ENCODE measurements at regions of chr11 and their contacts with region 1.

Region 1: DNA sequence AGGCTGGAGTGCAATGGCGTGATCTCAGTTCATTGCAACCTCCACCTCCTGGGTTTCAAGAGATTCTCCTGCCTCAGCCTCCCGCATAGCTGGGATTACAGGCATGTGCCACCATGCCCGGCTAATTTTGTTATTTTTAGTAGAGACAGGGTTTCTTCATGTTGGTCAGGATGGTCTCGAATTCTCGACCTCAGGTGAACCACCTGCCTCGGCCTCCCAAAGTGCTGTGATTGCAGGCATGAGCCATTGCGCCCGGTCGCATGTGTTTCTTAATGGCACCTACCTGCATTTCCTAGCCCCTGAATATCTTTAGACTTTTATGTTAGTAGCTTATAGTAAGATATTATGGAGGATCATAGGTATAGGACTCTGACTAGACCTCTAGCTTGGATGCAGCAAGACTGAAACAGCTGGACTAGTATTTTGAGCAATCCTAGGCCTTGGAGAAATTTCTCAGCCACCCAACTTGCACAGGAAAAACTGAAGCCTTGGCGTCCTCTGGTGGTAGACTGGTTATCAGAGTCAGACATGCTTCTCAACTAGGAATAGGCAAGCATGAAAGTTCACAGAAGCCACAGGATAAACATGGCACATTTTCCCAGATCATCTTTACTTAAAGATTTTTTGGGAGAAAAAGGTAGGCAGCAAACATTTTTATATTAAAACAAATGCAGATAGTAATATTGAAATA is 22.7 kb upstream of the C1QTNF4 start:
- DNase-seq: peak in 1 of 2 donors; percentile 66
- ATAC-seq: peak; percentile 59 to 90 (median 82)
- H3K4me3 ChIP-seq: no peak overlapping the region
- H3K27ac ChIP-seq: peak overlapping the region in 1 of 10 donors; percentile 37
- H3K4me1 ChIP-seq: peaks cover 0 to 11% (median 0%) of the 10 kb centered on the region in 9 donors
- H3K27me3 ChIP-seq: no peaks in the 10 kb centered on the region
- CTCF ChIP-seq: peak; percentile 46 to 82 (median 76)

Region 2: DNA sequence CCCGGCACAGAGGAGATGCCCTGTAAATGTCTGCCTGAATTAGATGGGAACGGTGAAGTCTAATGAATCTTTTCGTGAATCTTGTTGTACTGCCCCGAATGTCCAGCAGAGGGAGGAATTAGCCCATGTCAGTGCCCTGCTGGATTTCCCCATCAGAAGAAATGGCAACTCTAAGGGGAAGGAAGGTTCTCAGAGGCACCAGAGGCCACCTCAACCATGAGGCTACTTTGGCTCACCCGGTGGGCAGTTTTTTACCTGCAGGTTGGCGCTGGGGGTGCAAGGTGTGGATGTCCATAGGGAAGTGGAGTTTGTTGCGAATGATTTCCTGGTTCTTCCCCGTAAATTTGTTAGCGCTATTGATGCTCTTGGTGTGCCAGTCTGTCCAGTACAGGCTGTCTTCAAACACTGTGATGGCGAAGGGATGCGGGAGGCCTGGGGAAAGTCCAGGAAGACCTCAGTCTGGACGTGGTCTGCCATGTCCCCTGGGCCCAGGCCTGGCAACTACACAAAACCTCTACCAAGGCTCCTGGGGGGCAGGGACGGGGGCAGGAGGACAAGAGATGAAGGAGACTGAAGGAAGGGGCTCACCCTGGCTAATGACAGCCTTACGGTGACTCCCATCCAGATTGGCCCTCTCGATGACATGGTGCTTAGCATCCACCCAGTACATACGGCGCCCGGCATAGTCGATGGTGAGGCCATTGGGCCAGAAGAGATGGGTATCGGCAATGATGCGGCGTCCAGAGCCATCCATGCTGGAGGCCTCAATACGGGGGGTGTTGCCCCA is 727.0 kb before region 1 on chr11:
- intact Hi-C with region 1: loop called in 1 of 10 experiments (anchors 10 kb)
- DNase-seq: peak in 1 of 2 donors; percentile 76
- ATAC-seq: peak; percentile 46 to 86 (median 77)
- H3K4me3 ChIP-seq: no peak overlapping the region
- H3K27ac ChIP-seq: no peak overlapping the region
- H3K4me1 ChIP-seq: no peaks in the 10 kb centered on the region
- H3K27me3 ChIP-seq: no peaks in the 10 kb centered on the region
- CTCF ChIP-seq: peak; percentile 65 to 90 (median 84)

Region 3: GRCh38 chr11:47477323-47477722 is 139.5 kb before region 1 on chr11:
- intact Hi-C with region 1: loop called in 2 of 10 experiments (anchors 10 kb)
- DNase-seq: no peak
- ATAC-seq: peak in 1 of 8 donors; percentile 22
- H3K4me3 ChIP-seq: no peak overlapping the region
- H3K27ac ChIP-seq: peak overlapping the region in 1 of 10 donors; percentile 24
- H3K4me1 ChIP-seq: peaks cover 3 to 34% (median 23%) of the 10 kb centered on the region in 9 donors
- H3K27me3 ChIP-seq: no peaks in the 10 kb centered on the region
- CTCF ChIP-seq: no peak